Left ventricle myocardium inferior (tissue), 1 donor: ENCODE measurements at regions of chr7 and their contacts with region 1.

Region 1: GRCh38 chr7:40057292-40057691 is 77.1 kb downstream of the MPLKIP start:
- DNase-seq: no peak
- H3K4me3 ChIP-seq: no peak overlapping the region
- H3K27ac ChIP-seq: no peak overlapping the region
- H3K4me1 ChIP-seq: peaks cover 27% of the 10 kb centered on the region
- H3K27me3 ChIP-seq: no peaks in the 10 kb centered on the region
- CTCF ChIP-seq: no peak

Region 2: DNA sequence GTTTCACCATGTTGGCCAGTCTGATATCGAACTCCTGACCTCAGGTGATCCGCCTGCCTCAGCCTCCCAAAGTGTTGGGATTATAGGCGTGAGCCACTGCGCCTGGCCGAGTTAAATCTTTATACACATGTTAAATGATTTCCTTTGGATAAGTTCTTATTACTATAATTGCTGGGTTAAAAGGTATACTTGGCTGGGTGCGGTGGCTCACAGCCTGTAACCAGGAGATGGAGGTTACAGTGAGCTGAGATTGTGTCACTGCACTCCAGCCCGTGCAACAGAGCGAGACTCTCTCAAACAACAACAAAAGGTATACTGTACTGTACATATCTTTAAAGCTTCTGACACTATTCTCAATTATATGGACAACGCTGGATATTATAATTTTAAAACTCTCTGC is 160.5 kb before region 1 on chr7:
- intact Hi-C with region 1: loop called (anchors 2 kb)
- DNase-seq: no peak
- H3K4me3 ChIP-seq: peak overlapping the region; percentile 41
- H3K27ac ChIP-seq: no peak overlapping the region
- H3K4me1 ChIP-seq: peaks cover 9% of the 10 kb centered on the region
- H3K27me3 ChIP-seq: peaks cover under 1% of the 10 kb centered on the region
- CTCF ChIP-seq: no peak

Region 3: DNA sequence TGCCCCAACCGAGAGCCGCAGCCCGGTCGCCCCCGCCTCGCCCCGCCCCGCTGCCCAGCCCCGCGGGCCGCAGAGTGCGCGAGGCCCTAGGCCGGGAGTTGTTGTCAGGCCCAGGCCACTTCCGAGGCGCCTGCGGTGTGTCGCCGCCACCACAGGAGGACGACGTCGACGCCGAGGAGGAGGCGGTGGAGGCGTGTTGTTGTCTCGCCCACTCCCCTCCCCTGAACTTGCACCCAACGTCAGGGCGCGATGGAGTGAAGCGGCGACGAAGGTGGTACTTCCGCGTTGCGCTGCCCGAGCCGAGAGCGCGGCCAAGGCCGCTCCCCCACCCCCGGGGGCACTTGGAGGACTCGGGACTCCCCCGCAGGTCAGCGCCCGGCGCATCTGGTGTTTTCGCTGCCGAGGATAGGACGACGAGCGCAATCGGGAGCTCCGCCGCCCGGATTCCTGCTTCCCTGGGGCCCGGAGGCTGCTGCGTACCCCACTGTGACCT is 107.3 kb before region 1 on chr7 and contains the start of gene CDK13:
- intact Hi-C with region 1: loop called (anchors 10 kb)
- DNase-seq: peak; percentile 76
- H3K4me3 ChIP-seq: peak within 1 kb of the TSS; percentile 92
- H3K27ac ChIP-seq: peak within 1 kb of the TSS; percentile 98
- H3K4me1 ChIP-seq: peaks cover 61% of the 10 kb centered on the region
- H3K27me3 ChIP-seq: no peaks in the 10 kb centered on the region
- CTCF ChIP-seq: peak; percentile 37
- total RNA-seq, gene CDK13: 22.7 TPM

Region 4: GRCh38 chr7:40175725-40176510 is 118.6 kb after region 1 on chr7:
- intact Hi-C with region 1: no loop called
- DNase-seq: no peak
- H3K4me3 ChIP-seq: no peak overlapping the region
- H3K27ac ChIP-seq: no peak overlapping the region
- H3K4me1 ChIP-seq: no peaks in the 10 kb centered on the region
- H3K27me3 ChIP-seq: no peaks in the 10 kb centered on the region
- CTCF ChIP-seq: no peak